ENCODE measurements at regions of chr11 and their contacts with region 1.

Region 1: GRCh38 chr11:78045851-78046485 is 17.7 kb upstream of the THRSP start:
- DNase-seq: peak; percentile 79
- ATAC-seq: peak; percentile 96
- H3K4me3 Mint-ChIP-seq: peak overlapping the region; percentile 50
- H3K27ac Mint-ChIP-seq: no peak overlapping the region
- H3K4me1 Mint-ChIP-seq: peaks cover 18% of the 10 kb centered on the region
- H3K27me3 Mint-ChIP-seq: no peaks in the 10 kb centered on the region
- CTCF ChIP-seq: peak; percentile 98

Region 2: GRCh38 chr11:78000193-78000592 is 45.8 kb before region 1 on chr11:
- CTCF ChIA-PET with region 1: interaction called, 40 read pairs
- POLR2A ChIA-PET with region 1: interaction called, 4 read pairs
- intact Hi-C with region 1: no loop called
- DNase-seq: peak; percentile 66
- ATAC-seq: peak; percentile 93
- H3K4me3 Mint-ChIP-seq: no peak overlapping the region
- H3K27ac Mint-ChIP-seq: no peak overlapping the region
- H3K4me1 Mint-ChIP-seq: peaks cover 2% of the 10 kb centered on the region
- H3K27me3 Mint-ChIP-seq: peaks cover 2% of the 10 kb centered on the region
- CTCF ChIP-seq: peak; percentile 75

Region 3: DNA sequence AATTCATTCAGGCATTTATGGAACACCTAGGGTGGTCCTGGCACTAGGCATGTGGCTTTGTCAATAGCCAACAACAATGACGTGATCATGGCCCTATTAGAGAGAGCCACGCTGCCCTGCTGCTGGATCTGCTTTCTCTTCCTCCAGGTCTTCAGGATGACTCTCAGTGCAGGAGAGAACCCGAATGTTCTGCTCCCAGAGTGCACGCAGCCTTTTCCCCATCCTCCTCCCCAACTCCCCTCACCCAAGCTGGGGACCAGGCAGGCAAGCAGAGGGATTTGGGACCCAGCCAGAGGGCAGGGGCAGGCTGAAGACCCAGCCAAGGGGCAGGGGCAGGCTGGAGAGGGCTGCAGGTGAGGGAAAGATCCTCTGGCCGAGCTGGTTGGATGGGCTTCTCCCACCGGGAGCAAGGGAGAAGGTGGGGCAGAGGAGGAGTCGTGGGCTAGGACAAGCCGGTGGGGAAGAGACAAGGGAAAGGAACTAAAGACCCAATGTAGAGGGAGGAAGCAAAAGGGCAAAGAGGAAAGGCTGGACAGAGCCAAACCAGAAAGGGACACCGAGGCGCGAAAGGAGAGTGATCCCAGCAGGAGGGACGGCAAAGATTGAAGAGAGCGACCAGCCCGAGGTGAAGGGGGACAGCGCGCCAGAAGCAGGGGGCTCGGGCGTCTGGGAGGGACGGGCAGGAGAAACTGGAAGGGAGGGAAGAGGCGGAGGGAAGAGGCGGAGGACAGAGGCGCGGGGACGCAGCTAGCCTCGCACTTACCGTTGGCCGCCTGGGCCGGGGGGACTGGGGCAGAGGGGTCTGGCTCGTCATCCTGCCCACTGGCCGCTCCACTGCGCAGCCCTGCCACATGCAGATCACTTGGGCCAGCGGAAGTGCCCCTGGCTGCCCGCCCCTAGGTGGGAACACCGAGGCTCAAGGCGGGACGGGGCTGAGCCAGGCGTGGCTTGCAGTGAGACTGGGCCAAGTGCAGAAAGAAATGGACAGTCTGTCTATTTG is 23.3 kb before region 1 on chr11 and contains the start of gene KCTD14:
- CTCF ChIA-PET with region 1: interaction called, 15 read pairs
- POLR2A ChIA-PET with region 1: no interaction called
- intact Hi-C with region 1: no loop called
- DNase-seq: no peak
- ATAC-seq: no peak
- H3K4me3 Mint-ChIP-seq: no peak within 1 kb of the TSS
- H3K27ac Mint-ChIP-seq: no peak within 1 kb of the TSS
- H3K4me1 Mint-ChIP-seq: no peaks in the 10 kb centered on the region
- H3K27me3 Mint-ChIP-seq: peaks cover 12% of the 10 kb centered on the region
- CTCF ChIP-seq: no peak
- total RNA-seq, gene KCTD14: 0.16 TPM in 1 of 2 experiments, not detected in the other

Region 4: DNA sequence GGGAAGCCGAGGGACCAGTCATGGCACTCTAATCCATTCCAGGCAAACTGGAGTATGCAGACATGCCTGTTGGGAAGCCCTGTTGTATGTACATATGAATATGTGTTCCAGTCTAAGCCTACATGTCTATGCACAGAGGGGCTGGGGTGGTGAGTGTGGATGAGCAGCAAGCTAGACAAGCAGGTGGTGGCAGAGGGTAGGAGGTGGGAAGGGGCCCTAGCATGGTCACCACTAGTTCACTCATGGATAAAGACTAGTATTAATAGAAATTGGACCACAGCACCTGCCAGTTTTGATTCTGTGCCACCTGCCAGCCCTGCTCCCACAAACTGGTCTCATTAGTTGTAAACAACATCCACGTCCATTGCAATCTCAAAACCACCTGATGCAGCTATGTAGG is 19.2 kb after region 1 on chr11:
- CTCF ChIA-PET with region 1: interaction called, 10 read pairs
- POLR2A ChIA-PET with region 1: no interaction called
- intact Hi-C with region 1: no loop called
- DNase-seq: no peak
- ATAC-seq: no peak
- H3K4me3 Mint-ChIP-seq: no peak overlapping the region
- H3K27ac Mint-ChIP-seq: no peak overlapping the region
- H3K4me1 Mint-ChIP-seq: no peaks in the 10 kb centered on the region
- H3K27me3 Mint-ChIP-seq: no peaks in the 10 kb centered on the region
- CTCF ChIP-seq: no peak

Measured in activated CD8-positive, alpha-beta T cell treated with anti-CD3 and anti-CD28 coated beads for 36 hours (primary cell).